BJ (cell line): ENCODE measurements at regions of chr20 and their contacts with region 1.

Region 1: DNA sequence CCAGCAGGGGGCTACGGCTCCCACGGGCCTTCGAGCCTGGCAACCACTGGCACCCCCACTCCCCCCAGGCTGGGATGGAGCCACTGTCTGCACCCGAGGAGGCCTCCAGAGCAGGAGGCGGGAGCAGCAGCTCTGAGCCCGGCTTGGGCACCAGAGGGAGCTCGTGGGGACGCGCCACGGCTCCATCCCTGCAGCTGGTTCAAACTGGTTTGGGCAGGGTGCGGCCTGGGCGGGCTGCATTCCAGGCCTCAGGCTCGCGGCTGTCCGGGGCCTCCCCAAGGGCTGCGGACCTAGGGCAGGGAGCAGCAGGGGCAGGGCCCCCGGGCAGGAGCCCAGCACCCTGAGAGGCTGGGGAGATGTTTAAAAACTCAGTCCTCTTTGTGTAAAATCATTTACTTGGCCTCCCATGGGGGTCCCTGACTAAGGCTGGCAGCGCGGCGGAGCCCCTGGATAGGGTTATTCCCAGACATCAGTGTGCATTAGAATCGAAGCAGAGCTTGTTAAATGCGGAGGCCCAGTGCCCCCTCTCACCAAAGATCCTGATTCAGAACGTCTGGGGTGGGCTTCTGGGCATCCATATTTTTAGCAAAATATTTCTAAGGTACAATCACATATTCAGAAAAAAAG is 4.1 kb upstream of the BCAS4 start:
- DNase-seq: peak; percentile 46
- H3K4me3 ChIP-seq: no peak overlapping the region
- H3K27me3 ChIP-seq: no peaks in the 10 kb centered on the region
- CTCF ChIP-seq: peak; percentile 97

Region 2: GRCh38 chr20:50776122-50776817 is 14.5 kb before region 1 on chr20:
- CTCF ChIA-PET with region 1: interaction called, 11 read pairs
- POLR2A ChIA-PET with region 1: no interaction called
- DNase-seq: no peak
- H3K4me3 ChIP-seq: no peak overlapping the region
- H3K27me3 ChIP-seq: no peaks in the 10 kb centered on the region; the same call in 1 of the 2 replicates
- CTCF ChIP-seq: no peak

Region 3: GRCh38 chr20:50913690-50914375 is 123.1 kb after region 1 on chr20:
- CTCF ChIA-PET with region 1: interaction called, 22 read pairs
- POLR2A ChIA-PET with region 1: no interaction called
- DNase-seq: no peak
- H3K4me3 ChIP-seq: no peak overlapping the region
- H3K27me3 ChIP-seq: no peaks in the 10 kb centered on the region
- CTCF ChIP-seq: no peak

Region 4: DNA sequence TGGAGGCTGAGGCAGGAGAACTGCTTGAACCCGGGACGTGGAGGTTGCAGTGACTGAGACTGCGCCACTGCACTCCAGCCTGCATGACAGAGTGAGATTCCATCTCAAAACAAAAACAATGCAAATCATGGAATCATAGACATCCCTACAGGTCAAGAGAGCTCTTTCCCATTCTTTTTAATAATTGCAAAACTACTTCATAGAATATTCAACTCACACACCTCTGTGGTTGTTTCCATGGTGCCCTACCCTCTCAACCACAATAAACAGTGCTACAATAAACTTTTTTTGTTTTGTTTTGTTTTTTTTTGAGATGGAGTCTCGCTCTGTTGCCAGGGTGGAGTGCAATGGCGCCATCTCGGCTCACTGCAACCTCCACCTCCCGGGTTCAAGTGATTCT is 152.3 kb after region 1 on chr20:
- CTCF ChIA-PET with region 1: interaction called, 16 read pairs
- POLR2A ChIA-PET with region 1: no interaction called
- DNase-seq: no peak
- H3K4me3 ChIP-seq: no peak overlapping the region
- H3K27me3 ChIP-seq: no peaks in the 10 kb centered on the region
- CTCF ChIP-seq: no peak

Region 5: GRCh38 chr20:50987592-50988210 is 196.9 kb after region 1 on chr20:
- CTCF ChIA-PET with region 1: interaction called, 66 read pairs
- POLR2A ChIA-PET with region 1: interaction called, 3 read pairs
- DNase-seq: peak; percentile 44
- H3K4me3 ChIP-seq: no peak overlapping the region
- H3K27me3 ChIP-seq: no peaks in the 10 kb centered on the region
- CTCF ChIP-seq: peak; percentile 80